ENCODE measurements at regions of chr19 and their contacts with region 1.

Region 1: GRCh38 chr19:49937750-49938381 is 8.6 kb upstream of the NUP62 start:
- DNase-seq: peak; percentile 84
- ATAC-seq: peak; percentile 80
- H3K4me3 Mint-ChIP-seq: no peak overlapping the region
- H3K27ac Mint-ChIP-seq: no peak overlapping the region
- H3K4me1 Mint-ChIP-seq: peaks cover 15% of the 10 kb centered on the region
- H3K27me3 Mint-ChIP-seq: peaks cover 3% of the 10 kb centered on the region
- CTCF ChIP-seq: peak; percentile 99

Region 2: DNA sequence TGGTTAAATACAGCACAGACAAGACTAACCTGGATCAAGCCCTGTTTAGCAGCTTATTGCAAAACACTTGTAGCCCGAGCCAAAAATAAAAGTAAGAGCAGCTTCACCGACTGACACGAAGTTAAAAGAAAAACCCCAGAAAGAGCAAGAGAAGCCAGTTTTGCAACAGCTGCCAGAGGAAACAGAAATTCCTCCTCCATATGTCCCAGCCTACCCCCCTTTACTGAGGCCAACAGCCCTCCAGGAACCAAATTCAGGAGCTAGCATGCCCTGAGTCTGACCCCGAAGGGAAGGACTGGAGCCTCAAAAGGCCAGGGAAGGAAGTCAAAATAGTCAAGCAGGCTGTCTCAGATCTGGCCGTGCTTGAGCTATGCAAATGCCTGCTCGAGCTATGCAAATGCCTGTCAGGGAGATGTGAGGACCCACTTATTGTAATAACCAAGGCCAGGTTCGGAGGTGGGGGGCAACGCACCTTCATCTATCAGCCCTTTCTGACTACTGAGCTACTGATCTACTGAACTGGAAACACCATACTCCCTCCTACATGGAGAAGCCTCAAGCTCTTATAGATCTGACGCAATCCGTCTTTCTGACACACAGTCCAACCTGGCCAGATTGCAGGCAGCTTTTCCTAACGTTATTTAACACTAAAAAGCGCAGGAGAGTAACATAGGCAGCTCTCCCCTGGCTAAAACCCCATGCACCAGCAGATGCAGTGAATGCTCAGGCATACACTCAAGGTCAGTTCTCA is 16.4 kb after region 1 on chr19:
- CTCF ChIA-PET with region 1: interaction called, 21 read pairs
- POLR2A ChIA-PET with region 1: no interaction called
- intact Hi-C with region 1: no loop called
- DNase-seq: no peak
- ATAC-seq: no peak
- H3K4me3 Mint-ChIP-seq: no peak overlapping the region
- H3K27ac Mint-ChIP-seq: no peak overlapping the region
- H3K4me1 Mint-ChIP-seq: peaks cover 9% of the 10 kb centered on the region
- H3K27me3 Mint-ChIP-seq: peaks cover 19% of the 10 kb centered on the region
- CTCF ChIP-seq: no peak

Region 3: GRCh38 chr19:49977881-49978280 is 40.0 kb after region 1 on chr19:
- CTCF ChIA-PET with region 1: interaction called, 55 read pairs
- POLR2A ChIA-PET with region 1: interaction called, 3 read pairs
- intact Hi-C with region 1: loop called (anchors 2 kb)
- DNase-seq: no peak
- ATAC-seq: no peak
- H3K4me3 Mint-ChIP-seq: no peak overlapping the region
- H3K27ac Mint-ChIP-seq: no peak overlapping the region
- H3K4me1 Mint-ChIP-seq: no peaks in the 10 kb centered on the region
- H3K27me3 Mint-ChIP-seq: no peaks in the 10 kb centered on the region
- CTCF ChIP-seq: no peak

Region 4: DNA sequence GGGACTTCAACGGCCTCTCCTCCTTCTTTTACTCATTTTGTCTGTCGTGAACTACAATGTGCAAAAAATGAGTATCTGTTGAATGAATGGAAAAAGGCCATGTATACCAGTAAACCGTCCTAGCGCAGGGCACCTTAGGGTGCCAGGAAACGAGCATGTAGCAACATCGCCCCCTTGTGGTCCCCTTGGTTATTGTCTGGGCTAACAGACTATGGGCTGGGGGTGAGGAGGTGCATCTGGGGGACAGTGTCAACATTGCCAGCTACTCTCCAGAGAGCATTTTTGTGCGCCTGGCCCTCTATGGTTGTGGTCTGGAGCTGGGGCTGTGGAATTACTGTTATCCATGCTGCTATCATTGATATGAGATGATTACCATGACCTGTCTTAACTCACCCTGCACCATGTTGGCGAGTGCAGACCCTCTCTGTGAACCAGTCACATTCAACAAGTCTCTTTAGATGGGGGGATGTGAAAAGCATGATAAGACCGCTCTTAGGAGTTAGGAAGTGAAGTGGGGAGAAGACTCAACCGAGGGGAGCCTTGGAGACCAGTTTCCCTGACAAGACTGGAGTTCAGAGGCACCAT is 45.9 kb after region 1 on chr19:
- CTCF ChIA-PET with region 1: interaction called, 55 read pairs
- POLR2A ChIA-PET with region 1: interaction called, 4 read pairs
- intact Hi-C with region 1: loop called (anchors 2 kb)
- DNase-seq: peak; percentile 90
- ATAC-seq: peak; percentile 78
- H3K4me3 Mint-ChIP-seq: no peak overlapping the region
- H3K27ac Mint-ChIP-seq: no peak overlapping the region
- H3K4me1 Mint-ChIP-seq: peaks cover 10% of the 10 kb centered on the region
- H3K27me3 Mint-ChIP-seq: no peaks in the 10 kb centered on the region
- CTCF ChIP-seq: peak; percentile 92

Region 5: GRCh38 chr19:50315773-50316448 is 378.0 kb after region 1 on chr19:
- CTCF ChIA-PET with region 1: no interaction called
- POLR2A ChIA-PET with region 1: no interaction called
- intact Hi-C with region 1: no loop called
- DNase-seq: peak; percentile 76
- ATAC-seq: peak; percentile 91
- H3K4me3 Mint-ChIP-seq: peak overlapping the region; percentile 45
- H3K27ac Mint-ChIP-seq: no peak overlapping the region
- H3K4me1 Mint-ChIP-seq: peaks cover 13% of the 10 kb centered on the region
- H3K27me3 Mint-ChIP-seq: peaks cover 55% of the 10 kb centered on the region
- CTCF ChIP-seq: no peak